Activated naive CD4-positive, alpha-beta T cell treated with anti-CD3 and anti-CD28 coated beads for 36 hours (primary cell): ENCODE measurements at regions of chr15 and their contacts with region 1.

Region 1: GRCh38 chr15:89087830-89088604 is at the start of gene ABHD2:
- DNase-seq: peak; percentile 99
- H3K4me3 Mint-ChIP-seq: no peak within 1 kb of the TSS
- H3K27ac Mint-ChIP-seq: peak within 1 kb of the TSS; percentile 21
- H3K4me1 Mint-ChIP-seq: peaks cover 33% of the 10 kb centered on the region
- H3K27me3 Mint-ChIP-seq: no peaks in the 10 kb centered on the region
- total RNA-seq, gene ABHD2: 57.2 to 64.9 TPM

Region 2: DNA sequence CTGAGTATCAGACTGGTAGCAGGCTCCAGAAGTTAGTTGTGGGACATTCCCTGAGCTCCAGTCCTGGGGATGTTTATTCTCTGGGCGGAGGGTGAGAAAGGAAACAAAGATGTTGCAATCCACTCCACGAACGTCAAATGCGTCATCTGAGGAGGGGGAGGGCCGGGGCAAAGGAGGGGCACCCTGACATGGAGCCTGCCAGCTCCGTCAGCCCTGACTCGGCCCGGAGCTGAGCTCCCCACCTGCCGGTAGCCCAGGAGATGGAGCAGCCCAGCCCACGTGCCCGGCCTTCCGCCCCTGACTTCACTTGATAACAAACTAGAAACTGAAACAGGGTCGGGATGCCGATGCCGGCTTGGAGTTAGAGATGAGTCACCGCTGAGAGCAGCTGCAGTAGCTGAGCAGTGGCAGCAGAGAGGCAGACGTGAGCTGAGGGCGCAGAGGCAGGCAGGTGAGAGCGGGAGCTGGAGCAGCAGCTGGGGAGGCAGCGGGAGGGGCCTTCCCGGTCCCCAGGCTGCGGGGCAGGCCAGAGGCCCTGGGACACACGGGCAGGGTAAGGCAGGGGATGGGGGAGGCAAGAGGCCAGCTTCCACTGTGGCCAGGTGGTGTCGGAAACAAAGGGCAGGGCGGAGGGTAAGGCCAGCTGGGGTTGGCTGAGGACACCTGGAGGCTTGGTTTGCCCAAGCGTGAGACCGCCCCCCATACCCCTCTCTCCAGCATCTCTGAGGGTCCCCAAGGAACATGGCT is 449.2 kb before region 1 on chr15 and contains the start of gene ISG20:
- CTCF ChIA-PET with region 1: no interaction called
- intact Hi-C with region 1: loop called (anchors 1 kb)
- DNase-seq: peak; percentile 99
- H3K4me3 Mint-ChIP-seq: peak within 1 kb of the TSS; percentile 81
- H3K27ac Mint-ChIP-seq: peak within 1 kb of the TSS; percentile 96
- H3K4me1 Mint-ChIP-seq: peaks cover 79% of the 10 kb centered on the region
- H3K27me3 Mint-ChIP-seq: no peaks in the 10 kb centered on the region
- total RNA-seq, gene ISG20: 51.2 to 56.5 TPM

Region 3: DNA sequence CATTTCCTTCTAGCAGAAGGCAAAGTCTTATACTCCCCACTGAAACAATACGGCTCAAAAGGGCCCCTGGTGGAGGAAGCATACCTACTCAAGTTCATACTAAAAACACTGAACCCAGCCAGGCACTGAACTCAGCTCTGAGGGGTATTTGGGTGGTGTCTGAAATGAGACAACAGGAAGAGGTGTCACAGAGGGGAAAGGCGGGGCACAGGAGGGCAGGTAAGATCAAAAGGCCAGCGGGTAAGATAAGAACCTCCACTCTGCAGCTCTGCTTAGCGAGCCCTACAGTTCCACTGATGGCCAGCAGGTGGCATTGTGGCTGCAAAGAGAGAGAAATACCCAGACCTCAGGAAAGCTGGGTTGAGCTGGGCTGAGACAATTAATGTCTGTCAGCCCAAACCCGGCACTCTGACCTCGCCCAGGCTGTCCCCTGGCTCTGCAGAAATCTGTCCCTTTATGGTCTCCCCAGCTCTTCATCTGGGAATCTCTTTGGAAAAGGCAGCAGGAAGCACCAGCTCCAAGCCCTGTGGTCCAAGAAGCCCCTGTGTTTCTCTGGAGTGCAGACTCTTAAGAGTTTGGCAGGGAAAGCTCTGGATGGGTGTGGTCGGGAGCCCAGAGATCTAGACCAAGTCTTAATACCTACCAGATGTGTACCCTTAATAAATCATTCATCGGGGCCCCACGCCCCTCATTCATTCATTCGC is 183.2 kb before region 1 on chr15:
- CTCF ChIA-PET with region 1: interaction called, 3 read pairs
- intact Hi-C with region 1: loop called (anchors 2 kb)
- DNase-seq: peak; percentile 96
- H3K4me3 Mint-ChIP-seq: no peak overlapping the region
- H3K27ac Mint-ChIP-seq: peak overlapping the region; percentile 80
- H3K4me1 Mint-ChIP-seq: peaks cover 40% of the 10 kb centered on the region
- H3K27me3 Mint-ChIP-seq: no peaks in the 10 kb centered on the region

Region 4: GRCh38 chr15:89077750-89078149 is 10.3 kb before region 1 on chr15:
- CTCF ChIA-PET with region 1: no interaction called
- intact Hi-C with region 1: loop called (anchors 1 kb)
- DNase-seq: no peak
- H3K4me3 Mint-ChIP-seq: no peak overlapping the region
- H3K27ac Mint-ChIP-seq: peak overlapping the region; percentile 1
- H3K4me1 Mint-ChIP-seq: peaks cover 32% of the 10 kb centered on the region
- H3K27me3 Mint-ChIP-seq: no peaks in the 10 kb centered on the region

Region 5: DNA sequence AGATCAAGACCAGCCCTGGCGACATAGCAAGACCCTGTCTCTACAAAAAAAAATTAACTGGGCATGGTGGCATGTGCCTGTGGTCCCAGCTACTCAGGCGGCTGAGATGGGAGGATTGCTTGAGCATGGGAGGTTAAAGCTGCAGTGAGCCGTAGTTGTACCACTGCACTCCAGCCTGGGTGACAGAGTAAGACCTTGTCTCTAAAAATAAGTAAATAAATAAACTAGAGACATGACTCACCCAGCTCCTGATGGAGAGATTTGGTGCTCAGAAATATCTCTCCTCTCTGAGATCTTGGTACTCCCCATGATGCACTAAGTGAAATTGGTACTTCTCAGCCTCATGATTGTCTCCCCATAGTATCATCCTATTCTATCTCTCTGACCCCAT is 51.0 kb after region 1 on chr15:
- CTCF ChIA-PET with region 1: no interaction called
- intact Hi-C with region 1: no loop called
- DNase-seq: no peak
- H3K4me3 Mint-ChIP-seq: no peak overlapping the region
- H3K27ac Mint-ChIP-seq: no peak overlapping the region
- H3K4me1 Mint-ChIP-seq: peaks cover 44% of the 10 kb centered on the region
- H3K27me3 Mint-ChIP-seq: no peaks in the 10 kb centered on the region

Region 6: GRCh38 chr15:89171136-89172072 is 83.4 kb after region 1 on chr15:
- CTCF ChIA-PET with region 1: interaction called, 31 read pairs
- intact Hi-C with region 1: loop called (anchors 1 kb)
- DNase-seq: peak; percentile 68
- H3K4me3 Mint-ChIP-seq: no peak overlapping the region
- H3K27ac Mint-ChIP-seq: no peak overlapping the region
- H3K4me1 Mint-ChIP-seq: peaks cover 33% of the 10 kb centered on the region
- H3K27me3 Mint-ChIP-seq: no peaks in the 10 kb centered on the region

Region 7: GRCh38 chr15:89243691-89244471 is 155.9 kb after region 1 on chr15 and contains the start of gene FANCI:
- CTCF ChIA-PET with region 1: interaction called, 3 read pairs
- intact Hi-C with region 1: loop called (anchors 1 kb)
- DNase-seq: peak; percentile 99
- H3K4me3 Mint-ChIP-seq: peak within 1 kb of the TSS; percentile 98
- H3K27ac Mint-ChIP-seq: peak within 1 kb of the TSS; percentile 93
- H3K4me1 Mint-ChIP-seq: peaks cover 31% of the 10 kb centered on the region
- H3K27me3 Mint-ChIP-seq: no peaks in the 10 kb centered on the region
- total RNA-seq, gene FANCI: 268 to 283 TPM

Region 8: DNA sequence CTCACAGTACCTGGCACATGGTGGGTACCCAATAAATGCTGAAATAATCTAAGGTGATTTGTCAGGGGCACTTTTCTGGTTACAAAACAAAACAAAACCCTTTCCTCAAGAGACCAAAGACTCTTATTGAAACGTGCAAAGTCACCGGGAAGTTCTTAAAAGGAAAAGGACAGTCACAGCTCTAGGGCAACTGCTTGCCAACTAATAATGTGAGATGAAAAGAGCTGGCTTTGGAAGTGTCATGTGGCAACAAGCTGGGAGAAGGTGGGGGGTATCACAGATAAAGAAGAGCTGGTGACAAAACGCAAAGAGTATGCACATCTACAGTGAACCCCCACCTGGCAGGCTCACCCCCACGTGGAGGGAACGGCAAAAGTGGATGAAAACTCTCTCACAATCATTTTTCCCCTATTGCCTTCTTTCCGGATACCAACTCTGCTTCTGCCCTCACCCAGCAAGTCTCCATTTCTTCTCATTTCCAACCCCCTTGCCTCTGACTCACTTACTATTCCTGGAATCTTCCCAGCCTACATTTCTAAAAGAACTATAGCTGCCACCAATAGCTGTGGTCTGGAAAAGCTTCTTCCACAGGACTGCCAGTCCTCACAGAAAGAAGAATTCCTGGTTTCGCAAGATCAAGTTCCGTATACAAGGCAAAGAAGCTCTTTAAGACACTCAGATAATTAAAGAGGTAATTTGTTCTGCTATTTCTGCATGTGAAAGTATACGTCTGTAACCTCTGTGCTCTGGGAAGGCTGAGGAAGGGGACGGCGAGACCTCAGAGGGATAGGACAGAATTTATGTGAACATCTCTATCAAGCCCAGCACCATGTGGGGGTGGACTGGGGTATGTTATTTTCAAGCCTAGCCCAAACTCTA is 748.5 kb after region 1 on chr15:
- CTCF ChIA-PET with region 1: no interaction called
- intact Hi-C with region 1: no loop called
- DNase-seq: no peak
- H3K4me3 Mint-ChIP-seq: no peak overlapping the region
- H3K27ac Mint-ChIP-seq: no peak overlapping the region
- H3K4me1 Mint-ChIP-seq: no peaks in the 10 kb centered on the region
- H3K27me3 Mint-ChIP-seq: no peaks in the 10 kb centered on the region